Caco-2 (cell line): ENCODE measurements at regions of chr14 and their contacts with region 1.

Region 1: GRCh38 chr14:48983351-48983888 is 602.8 kb downstream of the RPS29 start:
- DNase-seq: peak; percentile 47 to 69
- H3K4me3 ChIP-seq: no peak overlapping the region
- H3K4me3 Mint-ChIP-seq: no peak overlapping the region
- H3K27ac Mint-ChIP-seq: no peak overlapping the region
- H3K4me1 ChIP-seq: peaks cover 22% of the 10 kb centered on the region
- H3K4me1 Mint-ChIP-seq: peaks cover 5% of the 10 kb centered on the region
- H3K27me3 ChIP-seq: no peaks in the 10 kb centered on the region
- H3K27me3 Mint-ChIP-seq: no peaks in the 10 kb centered on the region
- CTCF ChIP-seq: no peak

Region 2: GRCh38 chr14:48970803-48971394 is 12.5 kb before region 1 on chr14:
- CTCF ChIA-PET with region 1: no interaction called
- POLR2A ChIA-PET with region 1: interaction called, 3 read pairs
- intact Hi-C with region 1: loop called (anchors 1 kb)
- DNase-seq: peak in 1 of 2 experiments; percentile 10
- H3K4me3 ChIP-seq: no peak overlapping the region
- H3K4me3 Mint-ChIP-seq: no peak overlapping the region
- H3K27ac Mint-ChIP-seq: peak overlapping the region; percentile 57
- H3K4me1 ChIP-seq: peaks cover 84% of the 10 kb centered on the region
- H3K4me1 Mint-ChIP-seq: peaks cover 55% of the 10 kb centered on the region
- H3K27me3 ChIP-seq: no peaks in the 10 kb centered on the region
- H3K27me3 Mint-ChIP-seq: no peaks in the 10 kb centered on the region
- CTCF ChIP-seq: no peak